ENCODE measurements at regions of chr2 and their contacts with region 1.

Region 1: DNA sequence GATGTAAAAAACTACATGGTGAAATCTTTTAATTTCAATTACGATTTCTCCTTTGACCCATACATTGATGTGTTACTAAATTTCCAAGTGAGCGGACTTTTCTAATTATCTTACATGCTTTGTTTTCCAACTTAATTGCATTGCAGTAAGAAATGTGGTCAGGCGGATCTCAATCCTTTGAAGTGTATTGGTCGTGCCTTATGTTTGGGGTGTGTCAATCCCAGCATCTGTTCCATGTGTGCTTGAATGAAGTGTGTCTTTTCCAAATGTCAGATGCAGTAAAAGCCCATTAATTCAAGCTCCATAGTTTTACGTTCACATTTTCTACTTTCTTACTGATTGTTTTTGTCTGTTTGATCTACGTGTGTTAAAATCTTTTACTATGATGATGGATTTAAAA is 113.1 kb downstream of the UXS1 start:
- DNase-seq: no peak
- H3K4me3 ChIP-seq: no peak overlapping the region
- H3K27ac ChIP-seq: no peak overlapping the region
- H3K4me1 ChIP-seq: no peaks in the 10 kb centered on the region
- H3K27me3 ChIP-seq: no peaks in the 10 kb centered on the region
- CTCF ChIP-seq: no peak
- POLR2A ChIP-seq: no peak

Region 2: GRCh38 chr2:104279646-104280045 is 1801.3 kb before region 1 on chr2:
- intact Hi-C with region 1: no loop called
- DNase-seq: no peak
- H3K4me3 ChIP-seq: no peak overlapping the region
- H3K27ac ChIP-seq: no peak overlapping the region
- H3K4me1 ChIP-seq: no peaks in the 10 kb centered on the region
- H3K27me3 ChIP-seq: no peaks in the 10 kb centered on the region
- CTCF ChIP-seq: no peak
- POLR2A ChIP-seq: no peak

Region 3: GRCh38 chr2:105576440-105577252 is 504.3 kb before region 1 on chr2:
- intact Hi-C with region 1: loop called (anchors 5 kb)
- DNase-seq: no peak
- H3K4me3 ChIP-seq: no peak overlapping the region
- H3K27ac ChIP-seq: no peak overlapping the region
- H3K4me1 ChIP-seq: peaks cover 13% of the 10 kb centered on the region
- H3K27me3 ChIP-seq: no peaks in the 10 kb centered on the region
- CTCF ChIP-seq: peak in 2 of 3 experiments; percentile 24 to 49
- POLR2A ChIP-seq: no peak

Region 4: GRCh38 chr2:105617756-105618659 is 463.0 kb before region 1 on chr2:
- intact Hi-C with region 1: no loop called
- DNase-seq: no peak
- H3K4me3 ChIP-seq: no peak overlapping the region
- H3K27ac ChIP-seq: no peak overlapping the region
- H3K4me1 ChIP-seq: no peaks in the 10 kb centered on the region
- H3K27me3 ChIP-seq: no peaks in the 10 kb centered on the region
- CTCF ChIP-seq: no peak
- POLR2A ChIP-seq: no peak

Region 5: DNA sequence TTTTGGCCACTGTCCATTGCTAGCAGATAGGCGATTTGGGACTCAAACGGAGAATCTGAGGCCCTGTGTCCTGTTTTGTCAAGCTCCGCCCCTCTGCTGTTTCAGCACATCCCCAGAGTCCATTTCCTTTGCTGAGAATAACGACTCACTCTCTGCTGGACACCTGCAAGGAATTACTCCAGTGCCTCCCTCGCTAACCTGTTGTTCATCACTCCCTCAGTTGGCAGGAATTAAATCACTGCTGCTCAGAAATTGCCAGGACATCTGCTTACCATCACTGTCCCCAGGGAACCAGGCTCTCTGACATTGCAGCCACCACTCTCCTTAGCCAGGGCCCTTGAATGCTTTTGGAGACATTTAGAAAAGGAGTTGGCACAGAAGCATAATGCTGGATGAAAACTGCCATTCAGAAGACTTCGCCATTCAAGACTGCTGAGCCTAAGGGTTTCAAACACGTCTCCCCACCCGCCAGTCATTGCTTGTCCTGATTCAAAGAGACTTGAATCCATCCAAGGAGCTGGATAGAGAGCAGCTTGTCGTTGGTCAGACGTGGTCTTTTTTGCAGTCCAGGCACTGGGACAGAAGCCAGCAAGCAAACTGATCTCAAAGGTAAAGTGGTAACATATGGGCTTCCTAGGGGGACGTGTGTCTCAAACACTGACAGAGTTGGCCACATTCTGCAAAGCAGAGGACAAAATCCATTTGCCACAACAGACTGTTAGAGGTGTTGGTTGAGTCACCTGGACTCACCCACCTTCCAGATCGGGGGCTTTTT is 42.2 kb before region 1 on chr2:
- intact Hi-C with region 1: no loop called
- DNase-seq: no peak
- H3K4me3 ChIP-seq: no peak overlapping the region
- H3K27ac ChIP-seq: no peak overlapping the region
- H3K4me1 ChIP-seq: no peaks in the 10 kb centered on the region
- H3K27me3 ChIP-seq: no peaks in the 10 kb centered on the region
- CTCF ChIP-seq: no peak
- POLR2A ChIP-seq: no peak

Region 6: DNA sequence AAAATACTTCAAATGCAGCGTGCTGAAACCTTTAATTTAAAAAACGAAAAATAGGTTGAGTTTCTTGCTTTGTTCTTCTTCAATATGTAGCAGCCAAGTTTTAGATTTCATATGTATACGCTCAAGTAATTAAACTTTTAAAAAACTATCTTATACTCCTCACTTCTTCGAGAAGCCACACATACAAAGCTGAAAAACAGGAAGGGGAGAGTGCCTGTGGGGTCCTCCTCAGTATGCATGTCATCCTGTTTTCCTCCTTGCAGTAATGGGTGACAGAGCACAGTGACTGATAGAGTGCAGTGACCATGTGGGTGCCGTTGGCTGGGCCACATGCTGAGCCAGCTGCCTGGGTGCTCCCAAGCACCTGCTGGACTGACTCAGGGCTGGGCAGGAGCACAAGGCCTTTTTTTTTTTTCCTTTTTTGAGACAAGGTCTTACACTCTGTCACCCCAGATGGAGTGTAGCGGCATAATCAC is 79.9 kb after region 1 on chr2:
- intact Hi-C with region 1: no loop called
- DNase-seq: no peak
- H3K4me3 ChIP-seq: no peak overlapping the region
- H3K27ac ChIP-seq: no peak overlapping the region
- H3K4me1 ChIP-seq: no peaks in the 10 kb centered on the region
- H3K27me3 ChIP-seq: no peaks in the 10 kb centered on the region
- CTCF ChIP-seq: no peak
- POLR2A ChIP-seq: no peak

Measured in vagina (tissue), 2 donors.